Activated naive CD4-positive, alpha-beta T cell treated with anti-CD3 and anti-CD28 coated beads for 36 hours (primary cell): ENCODE measurements at regions of chr1 and their contacts with region 1.

Region 1: GRCh38 chr1:67404212-67404620 is 26.0 kb downstream of the SERBP1 start:
- DNase-seq: no peak
- H3K4me3 Mint-ChIP-seq: no peak overlapping the region
- H3K27ac Mint-ChIP-seq: peak overlapping the region; percentile 50
- H3K4me1 Mint-ChIP-seq: peaks cover 19% of the 10 kb centered on the region
- H3K27me3 Mint-ChIP-seq: no peaks in the 10 kb centered on the region

Region 2: GRCh38 chr1:67418839-67419586 is 14.8 kb after region 1 on chr1:
- CTCF ChIA-PET with region 1: interaction called, 3 read pairs
- intact Hi-C with region 1: loop called (anchors 1 kb)
- DNase-seq: no peak
- H3K4me3 Mint-ChIP-seq: no peak overlapping the region
- H3K27ac Mint-ChIP-seq: peak overlapping the region; percentile 72
- H3K4me1 Mint-ChIP-seq: peaks cover 85% of the 10 kb centered on the region
- H3K27me3 Mint-ChIP-seq: no peaks in the 10 kb centered on the region